ENCODE measurements at regions of chr9 and their contacts with region 1.

Region 1: DNA sequence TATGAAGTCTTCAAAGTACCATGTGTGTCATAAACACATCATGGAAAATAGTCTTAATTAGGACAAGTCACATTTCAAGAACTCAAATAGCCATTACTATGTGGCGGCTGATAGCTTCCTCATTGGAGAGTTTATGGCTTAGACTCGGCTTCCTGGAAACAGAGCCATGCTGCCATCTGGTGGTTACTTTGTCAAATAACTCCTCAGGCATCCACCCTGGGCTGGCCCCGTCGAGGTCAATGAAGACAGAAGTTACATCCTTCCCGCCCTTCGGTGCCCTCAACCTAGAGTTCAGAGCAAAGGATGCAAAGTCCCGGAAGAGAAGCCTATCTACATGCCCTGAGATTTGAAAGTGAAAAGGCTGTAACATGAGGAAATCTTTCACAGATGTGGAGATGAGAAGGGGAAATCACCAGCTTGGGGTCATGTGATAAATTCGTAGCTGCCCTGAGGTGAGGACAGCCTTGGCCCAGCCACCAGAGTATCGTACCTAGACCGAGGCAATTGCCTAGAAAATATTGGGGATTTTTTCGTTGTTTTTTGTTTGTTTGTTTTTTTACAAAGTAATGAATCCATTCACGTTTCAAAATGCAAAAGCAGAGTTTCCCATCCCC is 45.5 kb upstream of the ZNF169 start:
- DNase-seq: peak; percentile 35 to 90 (median 65)
- ATAC-seq: peak; percentile 79 to 95 (median 92)
- H3K4me3 ChIP-seq: no peak overlapping the region
- H3K4me3 Mint-ChIP-seq: no peak overlapping the region
- H3K27ac ChIP-seq: no peak overlapping the region
- H3K27ac Mint-ChIP-seq: peak overlapping the region in 1 of 2 donors; percentile 45
- H3K4me1 ChIP-seq: peaks cover 0 to 3% of the 10 kb centered on the region in 2 experiments
- H3K4me1 Mint-ChIP-seq: peaks cover 3 to 5% (median 3%) of the 10 kb centered on the region in 3 donors
- H3K27me3 ChIP-seq: peaks cover 0 to 28% of the 10 kb centered on the region in 2 experiments
- H3K27me3 Mint-ChIP-seq: peaks cover 17 to 25% of the 10 kb centered on the region in 2 donors

Region 2: DNA sequence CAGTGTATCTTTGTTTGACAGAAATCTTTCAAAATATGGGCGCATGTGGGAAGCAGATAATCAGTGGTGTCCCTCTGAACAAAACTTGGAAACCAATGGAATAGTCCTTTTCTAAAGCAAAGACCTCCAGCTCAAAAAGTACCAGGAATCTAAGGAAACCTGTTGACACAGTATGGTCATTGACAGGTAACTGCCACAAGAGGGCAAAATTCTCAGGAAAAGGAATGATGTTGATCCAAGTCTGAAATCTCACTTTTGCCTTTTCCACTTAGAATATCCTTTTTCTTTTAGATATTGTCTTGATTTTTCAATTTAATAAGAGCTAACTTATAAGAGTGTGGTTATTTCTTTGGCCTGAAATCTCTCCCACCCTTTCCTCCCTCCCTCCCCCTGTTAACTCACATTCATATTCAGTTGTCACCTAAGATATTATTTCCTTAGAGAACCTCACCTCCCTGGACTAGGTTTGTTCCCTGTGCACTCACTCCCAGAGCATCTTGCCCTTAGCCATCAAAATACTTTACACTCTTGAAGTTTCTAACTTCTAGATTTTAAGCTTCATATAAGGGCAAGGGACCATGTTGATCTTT is 199.5 kb before region 1 on chr9:
- CTCF ChIA-PET with region 1: interaction called, 4 to 19 read pairs
- POLR2A ChIA-PET with region 1: no interaction called
- DNase-seq: peak in 1 of 35 experiments; percentile 37
- ATAC-seq: no peak
- H3K4me3 ChIP-seq: no peak overlapping the region
- H3K4me3 Mint-ChIP-seq: no peak overlapping the region
- H3K27ac ChIP-seq: no peak overlapping the region
- H3K27ac Mint-ChIP-seq: no peak overlapping the region
- H3K4me1 ChIP-seq: peaks cover 5 to 16% of the 10 kb centered on the region in 2 experiments
- H3K4me1 Mint-ChIP-seq: peaks cover 20 to 25% (median 23%) of the 10 kb centered on the region in 3 donors
- H3K27me3 ChIP-seq: no peaks in the 10 kb centered on the region
- H3K27me3 Mint-ChIP-seq: no peaks in the 10 kb centered on the region

Region 3: GRCh38 chr9:94065535-94065961 is 148.1 kb before region 1 on chr9:
- CTCF ChIA-PET with region 1: interaction called, 60 to 76 read pairs
- POLR2A ChIA-PET with region 1: interaction called in 1 of 2 experiments, 3 read pairs
- DNase-seq: peak; percentile 35 to 84 (median 66)
- ATAC-seq: peak; percentile 26 to 62 (median 58)
- H3K4me3 ChIP-seq: no peak overlapping the region
- H3K4me3 Mint-ChIP-seq: no peak overlapping the region
- H3K27ac ChIP-seq: no peak overlapping the region
- H3K27ac Mint-ChIP-seq: no peak overlapping the region
- H3K4me1 ChIP-seq: no peaks in the 10 kb centered on the region
- H3K4me1 Mint-ChIP-seq: peaks cover 0 to 4% (median 4%) of the 10 kb centered on the region in 3 donors
- H3K27me3 ChIP-seq: no peaks in the 10 kb centered on the region
- H3K27me3 Mint-ChIP-seq: no peaks in the 10 kb centered on the region